Posterior cingulate gyrus (tissue), 11 donors: ENCODE measurements at regions of chrX and their contacts with region 1.

Region 1: DNA sequence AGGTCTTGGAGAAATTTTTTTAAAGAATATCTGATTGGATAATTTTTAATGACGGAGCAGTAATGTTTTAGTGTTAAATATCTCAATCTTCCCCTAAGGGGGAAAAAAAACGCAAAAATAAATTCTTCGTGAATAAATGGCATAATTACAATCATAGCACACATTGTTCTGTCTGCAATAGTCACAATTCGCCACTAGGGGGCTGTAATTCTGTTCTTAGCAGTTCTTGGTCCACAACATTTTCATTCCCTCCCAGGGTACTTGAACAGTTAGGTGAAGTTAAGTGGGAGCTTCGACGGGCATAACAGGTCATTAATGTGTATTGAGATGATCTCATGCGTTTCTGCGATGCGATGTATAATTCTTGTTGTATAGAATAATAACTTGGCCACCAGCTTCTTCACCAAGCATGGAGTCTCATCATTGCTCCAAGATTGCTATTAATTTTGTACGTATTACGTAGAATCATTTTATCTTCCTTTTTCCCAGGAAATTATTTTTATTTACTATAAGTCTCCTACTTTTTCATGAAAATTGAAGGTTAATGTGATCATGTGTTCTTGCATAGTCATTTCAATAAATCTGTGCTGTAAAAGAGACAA is 27.2 kb downstream of the HTR2C start:
- DNase-seq: peak in 1 of 10 donors; percentile 23

Region 2: GRCh38 chrX:115147220-115147619 is 536.1 kb after region 1 on chrX:
- intact Hi-C with region 1: loop called (anchors 5 kb)
- DNase-seq: no peak